ENCODE measurements at regions of chr4 and their contacts with region 1.

Region 1: DNA sequence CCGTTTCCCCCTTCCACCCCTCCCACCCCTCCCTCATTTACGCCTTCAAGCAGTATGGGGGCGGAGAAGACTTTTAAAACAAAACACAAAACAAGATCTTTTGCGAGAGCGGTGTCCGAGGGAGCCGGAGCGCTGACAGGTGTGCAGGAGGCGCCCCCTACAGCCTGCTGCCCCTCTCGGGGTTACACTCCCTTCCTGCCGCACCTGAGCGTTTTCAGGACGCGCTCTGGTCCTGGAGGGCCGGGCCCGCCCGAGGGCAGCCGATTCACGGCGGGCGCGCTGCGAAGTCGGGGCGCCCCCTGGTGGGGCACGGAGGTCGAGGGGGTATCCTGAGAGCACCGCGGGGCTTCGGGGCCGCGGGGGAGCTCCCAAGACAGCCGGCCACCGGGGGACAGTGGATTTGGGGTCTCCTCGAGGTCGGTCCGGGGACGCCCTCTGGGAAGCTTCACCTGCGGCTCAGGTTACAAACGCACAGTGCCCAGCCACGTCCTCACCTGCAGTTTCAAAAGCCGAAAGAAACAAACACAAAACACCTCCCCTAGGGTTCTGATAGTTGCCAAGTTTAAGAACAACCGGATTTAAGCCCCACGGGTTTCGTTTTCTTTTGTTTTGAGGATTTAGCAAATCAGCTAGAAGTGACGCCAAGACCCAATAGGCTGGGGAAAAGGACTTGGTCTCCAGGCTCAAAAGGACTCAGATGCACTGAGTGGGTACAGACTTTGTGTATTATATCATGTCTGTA is 8.0 kb upstream of the NEUROG2 start:
- DNase-seq: peak; percentile 73
- ATAC-seq: peak; percentile 99
- H3K4me3 ChIP-seq: peak overlapping the region; percentile 45 to 61
- H3K27ac ChIP-seq: no peak overlapping the region; the same call in 1 of the 2 replicates
- H3K4me1 ChIP-seq: peaks cover 0 to 9% of the 10 kb centered on the region in 2 experiments; a peak in 1 of 4 replicates
- H3K27me3 ChIP-seq: no peaks in the 10 kb centered on the region
- CTCF ChIP-seq: peak; percentile 83 to 98 (median 95); a peak in 5 of 6 replicates
- POLR2A ChIP-seq: no peak
- RAD21 ChIP-seq: peak; percentile 99

Region 2: GRCh38 chr4:112082954-112083586 is 440.9 kb before region 1 on chr4:
- CTCF ChIA-PET with region 1: no interaction called
- POLR2A ChIA-PET with region 1: no interaction called
- RAD21 ChIA-PET with region 1: no interaction called
- intact Hi-C with region 1: no loop called
- DNase-seq: peak; percentile 96
- ATAC-seq: peak; percentile 86
- H3K4me3 ChIP-seq: peak overlapping the region in 1 of 2 experiments; percentile 29; a peak in 2 of 4 replicates
- H3K27ac ChIP-seq: peak overlapping the region; percentile 92
- H3K4me1 ChIP-seq: peaks cover 43 to 70% of the 10 kb centered on the region in 2 experiments
- H3K27me3 ChIP-seq: no peaks in the 10 kb centered on the region
- CTCF ChIP-seq: no peak
- POLR2A ChIP-seq: no peak
- RAD21 ChIP-seq: peak; percentile 16; the same call in 1 of the 2 replicates

Region 3: DNA sequence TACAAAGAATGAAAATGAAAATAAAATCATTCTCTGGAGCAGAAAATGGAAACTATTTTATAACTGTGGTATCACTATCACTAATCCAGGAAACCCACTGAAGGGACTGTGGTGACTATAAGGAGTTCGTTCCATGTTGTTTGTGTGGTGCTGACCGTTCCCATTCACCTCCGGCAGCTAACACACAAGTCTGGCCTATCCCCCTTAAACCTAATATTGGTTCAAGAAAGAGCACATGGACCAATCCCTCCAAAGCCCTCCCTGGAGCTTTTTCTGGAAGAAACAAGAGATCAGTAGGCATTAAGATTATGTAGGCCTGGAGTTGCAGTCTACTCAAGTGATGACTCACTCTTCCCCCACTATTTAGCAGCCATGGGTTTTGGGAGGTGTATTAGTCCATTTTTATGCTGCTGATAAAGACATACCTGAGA is 404.6 kb before region 1 on chr4:
- CTCF ChIA-PET with region 1: no interaction called
- POLR2A ChIA-PET with region 1: no interaction called
- RAD21 ChIA-PET with region 1: no interaction called
- intact Hi-C with region 1: no loop called
- DNase-seq: no peak
- ATAC-seq: no peak
- H3K4me3 ChIP-seq: no peak overlapping the region
- H3K27ac ChIP-seq: no peak overlapping the region
- H3K4me1 ChIP-seq: no peaks in the 10 kb centered on the region
- H3K27me3 ChIP-seq: no peaks in the 10 kb centered on the region
- CTCF ChIP-seq: no peak
- POLR2A ChIP-seq: no peak
- RAD21 ChIP-seq: no peak

Region 4: DNA sequence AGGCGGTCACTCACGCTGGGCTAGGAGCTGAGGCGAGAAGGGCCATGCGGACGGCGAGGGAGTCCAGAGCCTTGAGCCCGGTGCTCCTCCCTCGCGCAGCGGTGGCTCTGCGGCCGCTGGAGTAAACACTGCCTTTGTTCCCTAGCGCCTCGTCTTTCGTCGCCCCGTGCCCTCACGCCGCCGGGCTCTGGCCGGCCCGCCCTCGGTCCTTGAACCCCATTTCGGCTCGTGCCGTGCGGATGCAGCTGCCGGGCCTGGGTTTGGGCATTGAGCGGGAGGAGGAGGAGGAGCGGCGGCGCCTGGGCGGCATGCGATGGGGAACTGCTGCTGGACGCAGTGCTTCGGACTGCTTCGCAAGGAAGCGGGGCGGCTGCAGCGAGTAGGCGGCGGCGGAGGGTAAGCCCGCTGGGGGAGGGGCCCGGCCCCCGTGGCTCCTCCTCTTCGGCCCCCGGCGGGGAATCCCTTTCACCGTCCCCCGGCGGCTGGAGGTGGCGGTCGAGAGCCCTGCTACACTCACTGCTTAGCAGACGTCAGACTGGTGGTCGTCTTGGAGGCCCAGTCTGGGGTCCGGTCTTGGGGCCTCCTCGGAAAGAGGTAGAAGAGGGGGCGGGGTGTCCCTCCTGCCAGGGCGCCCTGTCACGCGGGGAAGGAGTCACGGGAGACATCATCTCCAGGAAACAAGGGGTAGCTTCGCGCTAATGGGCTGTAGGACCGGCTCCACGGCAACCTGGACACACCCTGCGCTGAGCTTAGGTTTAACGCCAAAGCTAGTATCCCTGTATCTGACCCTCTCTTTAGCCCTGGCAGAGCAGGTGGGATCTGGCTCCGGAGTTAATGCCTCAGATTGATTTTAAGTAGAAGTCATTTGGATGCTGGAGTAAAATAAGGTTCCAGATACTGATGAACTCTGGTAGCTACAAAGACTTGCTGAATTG is 291.9 kb before region 1 on chr4 and contains the start of gene AP1AR:
- CTCF ChIA-PET with region 1: no interaction called
- POLR2A ChIA-PET with region 1: no interaction called
- RAD21 ChIA-PET with region 1: no interaction called
- intact Hi-C with region 1: loop called (anchors 10 kb)
- DNase-seq: peak; percentile 44
- ATAC-seq: peak; percentile 76
- H3K4me3 ChIP-seq: peak within 1 kb of the TSS; percentile 82 to 89
- H3K27ac ChIP-seq: peak within 1 kb of the TSS; percentile 79
- H3K4me1 ChIP-seq: peaks cover 18 to 38% of the 10 kb centered on the region in 2 experiments; a peak in 3 of 4 replicates
- H3K27me3 ChIP-seq: no peaks in the 10 kb centered on the region
- CTCF ChIP-seq: peak in 2 of 3 experiments; percentile 38 to 40; a peak in 3 of 6 replicates
- POLR2A ChIP-seq: peak; percentile 65
- RAD21 ChIP-seq: no peak
- total RNA-seq, gene AP1AR: 56.7 TPM

Region 5: GRCh38 chr4:112327965-112328733 is 195.8 kb before region 1 on chr4:
- CTCF ChIA-PET with region 1: interaction called, 11 read pairs
- POLR2A ChIA-PET with region 1: no interaction called
- RAD21 ChIA-PET with region 1: interaction called in 1 of 2 experiments, 3 read pairs
- intact Hi-C with region 1: loop called (anchors 1 kb)
- DNase-seq: peak; percentile 32
- ATAC-seq: peak; percentile 63; the same call in 1 of the 2 replicates
- H3K4me3 ChIP-seq: no peak overlapping the region
- H3K27ac ChIP-seq: no peak overlapping the region
- H3K4me1 ChIP-seq: no peaks in the 10 kb centered on the region
- H3K27me3 ChIP-seq: no peaks in the 10 kb centered on the region
- CTCF ChIP-seq: peak; percentile 37 to 67 (median 62); a peak in 5 of 6 replicates
- POLR2A ChIP-seq: no peak
- RAD21 ChIP-seq: peak; percentile 73

Region 6: GRCh38 chr4:112536123-112536522 is 12.2 kb after region 1 on chr4:
- CTCF ChIA-PET with region 1: interaction called, 14 read pairs
- POLR2A ChIA-PET with region 1: no interaction called
- RAD21 ChIA-PET with region 1: interaction called in 1 of 2 experiments, 3 read pairs
- intact Hi-C with region 1: no loop called
- DNase-seq: no peak
- ATAC-seq: no peak
- H3K4me3 ChIP-seq: no peak overlapping the region
- H3K27ac ChIP-seq: no peak overlapping the region
- H3K4me1 ChIP-seq: peaks cover 2 to 7% of the 10 kb centered on the region in 2 experiments; a peak in 1 of 4 replicates
- H3K27me3 ChIP-seq: no peaks in the 10 kb centered on the region
- CTCF ChIP-seq: no peak
- POLR2A ChIP-seq: no peak
- RAD21 ChIP-seq: no peak

Region 7: DNA sequence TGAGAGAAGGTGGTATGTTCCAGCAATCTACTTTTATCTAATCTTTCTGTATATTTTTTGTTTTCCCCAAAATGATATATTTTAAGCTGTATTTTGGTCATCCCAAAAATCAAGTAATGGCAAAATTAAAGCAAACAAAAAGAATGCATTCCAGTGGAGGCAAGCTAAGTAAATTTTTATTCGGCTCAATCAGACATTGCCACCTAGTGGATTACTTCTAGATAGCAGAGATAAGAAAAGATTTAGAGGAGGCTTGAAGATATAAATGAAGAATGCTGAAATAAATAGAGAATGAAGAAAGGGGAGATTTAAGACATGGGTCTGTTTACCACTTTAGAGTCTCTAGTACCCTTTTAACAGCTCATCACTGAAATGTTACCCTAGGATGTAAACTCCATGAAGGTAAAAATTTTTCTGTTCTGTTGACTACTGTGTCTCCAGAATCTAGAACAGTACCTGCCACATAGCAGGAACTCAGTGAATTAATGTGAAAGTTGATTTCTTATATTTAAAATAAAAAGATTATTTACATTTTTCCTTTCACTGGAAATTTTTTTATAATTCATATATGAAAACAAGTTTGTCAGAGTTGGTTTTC is 414.6 kb after region 1 on chr4:
- CTCF ChIA-PET with region 1: no interaction called
- POLR2A ChIA-PET with region 1: no interaction called
- RAD21 ChIA-PET with region 1: no interaction called
- intact Hi-C with region 1: no loop called
- DNase-seq: peak; percentile 31
- ATAC-seq: peak; percentile 59
- H3K4me3 ChIP-seq: no peak overlapping the region
- H3K27ac ChIP-seq: no peak overlapping the region
- H3K4me1 ChIP-seq: no peaks in the 10 kb centered on the region
- H3K27me3 ChIP-seq: no peaks in the 10 kb centered on the region
- CTCF ChIP-seq: peak; percentile 72 to 88 (median 86)
- POLR2A ChIP-seq: no peak
- RAD21 ChIP-seq: peak; percentile 81